ENCODE measurements at regions of chr7 and their contacts with region 1.

Region 1: DNA sequence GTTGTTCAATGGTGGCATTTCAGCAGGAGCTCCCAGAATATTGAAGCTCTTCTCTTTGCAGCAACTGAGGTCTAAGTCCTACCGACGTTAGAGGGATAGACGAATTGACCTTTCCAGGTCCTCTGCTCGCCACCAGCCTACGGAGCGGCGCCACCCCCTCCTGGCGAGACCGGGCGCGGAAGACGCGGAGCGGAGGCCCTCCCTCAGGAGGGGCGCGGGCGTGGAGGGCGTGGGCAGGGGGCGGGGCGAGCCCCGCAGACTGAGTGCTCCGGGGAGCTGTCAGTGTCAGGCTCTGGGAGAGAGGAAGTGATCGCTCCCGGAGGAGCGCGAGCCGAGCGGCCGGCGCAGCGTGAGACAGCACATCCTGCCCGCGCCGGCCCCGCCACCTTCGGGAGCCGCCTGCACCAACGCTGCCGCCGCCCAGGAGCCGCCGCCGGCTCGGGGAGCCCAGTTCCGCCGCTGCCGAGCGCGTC is at the start of gene DYNC1I1:
- DNase-seq: peak; percentile 64 to 85 (median 78)
- H3K4me3 ChIP-seq: peak within 1 kb of the TSS; percentile 62
- H3K27ac ChIP-seq: peak within 1 kb of the TSS in 1 of 2 donors; percentile 20
- H3K4me1 ChIP-seq: peaks cover 6% of the 10 kb centered on the region
- H3K27me3 ChIP-seq: no peaks in the 10 kb centered on the region
- CTCF ChIP-seq: no peak
- EP300 ChIP-seq: no peak
- POLR2A ChIP-seq: no peak
- total RNA-seq, gene DYNC1I1: 4.5 to 19.3 (median 8.4) TPM

Region 2: GRCh38 chr7:95730493-95731280 is 41.6 kb before region 1 on chr7:
- intact Hi-C with region 1: loop called in 1 of 4 experiments (anchors 2 kb)
- DNase-seq: no peak
- H3K4me3 ChIP-seq: no peak overlapping the region
- H3K27ac ChIP-seq: no peak overlapping the region
- H3K4me1 ChIP-seq: no peaks in the 10 kb centered on the region
- H3K27me3 ChIP-seq: no peaks in the 10 kb centered on the region
- CTCF ChIP-seq: no peak
- EP300 ChIP-seq: no peak
- POLR2A ChIP-seq: no peak

Region 3: DNA sequence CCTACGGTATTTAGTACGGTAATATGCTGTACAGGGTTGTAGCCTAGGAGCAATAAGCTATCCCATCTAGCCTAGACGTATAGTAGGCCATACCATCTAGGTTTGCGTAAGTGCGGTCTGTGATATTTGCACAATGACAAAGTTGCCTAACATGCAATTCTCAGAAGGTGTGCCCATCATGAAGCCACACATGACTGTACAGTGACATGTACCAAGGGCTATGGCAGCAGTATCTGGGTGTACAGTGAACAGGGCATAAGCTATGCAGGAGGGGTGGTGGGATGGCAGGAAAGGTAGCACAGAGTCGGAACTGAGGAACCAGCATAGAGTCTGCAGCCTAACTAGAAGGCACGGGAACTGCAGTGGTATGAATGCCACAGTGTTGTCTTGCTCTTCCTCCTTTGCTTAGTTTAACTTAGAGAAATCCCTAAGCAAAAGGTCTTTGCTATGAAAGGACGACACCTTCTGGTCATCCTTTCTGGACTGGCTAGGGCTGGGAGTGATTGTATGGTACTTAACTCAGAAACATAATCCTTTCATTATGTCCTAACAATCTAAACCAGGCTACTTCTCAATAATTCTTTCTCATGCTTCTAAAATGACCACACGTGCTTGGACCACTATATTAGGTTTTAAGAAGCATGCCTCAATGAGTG is 93.5 kb after region 1 on chr7:
- intact Hi-C with region 1: loop called in 1 of 4 experiments (anchors 10 kb)
- DNase-seq: no peak
- H3K4me3 ChIP-seq: no peak overlapping the region
- H3K27ac ChIP-seq: no peak overlapping the region
- H3K4me1 ChIP-seq: no peaks in the 10 kb centered on the region
- H3K27me3 ChIP-seq: no peaks in the 10 kb centered on the region
- CTCF ChIP-seq: no peak
- EP300 ChIP-seq: no peak
- POLR2A ChIP-seq: no peak